Psoas muscle (tissue), 8 donors: ENCODE measurements at regions of chr4 and their contacts with region 1.

Region 1: GRCh38 chr4:76251441-76252270 is at the start of gene FAM47E:
- DNase-seq: peak; percentile 82 to 93
- ATAC-seq: peak; percentile 98 to 99 (median 98)
- H3K4me3 ChIP-seq: peak within 1 kb of the TSS; percentile 79
- H3K27ac ChIP-seq: peak within 1 kb of the TSS; percentile 78
- H3K4me1 ChIP-seq: peaks cover 10% of the 10 kb centered on the region
- H3K27me3 ChIP-seq: no peaks in the 10 kb centered on the region
- CTCF ChIP-seq: peak; percentile 49
- total RNA-seq, gene FAM47E: 1.7 to 4.6 (median 3.2) TPM

Region 2: DNA sequence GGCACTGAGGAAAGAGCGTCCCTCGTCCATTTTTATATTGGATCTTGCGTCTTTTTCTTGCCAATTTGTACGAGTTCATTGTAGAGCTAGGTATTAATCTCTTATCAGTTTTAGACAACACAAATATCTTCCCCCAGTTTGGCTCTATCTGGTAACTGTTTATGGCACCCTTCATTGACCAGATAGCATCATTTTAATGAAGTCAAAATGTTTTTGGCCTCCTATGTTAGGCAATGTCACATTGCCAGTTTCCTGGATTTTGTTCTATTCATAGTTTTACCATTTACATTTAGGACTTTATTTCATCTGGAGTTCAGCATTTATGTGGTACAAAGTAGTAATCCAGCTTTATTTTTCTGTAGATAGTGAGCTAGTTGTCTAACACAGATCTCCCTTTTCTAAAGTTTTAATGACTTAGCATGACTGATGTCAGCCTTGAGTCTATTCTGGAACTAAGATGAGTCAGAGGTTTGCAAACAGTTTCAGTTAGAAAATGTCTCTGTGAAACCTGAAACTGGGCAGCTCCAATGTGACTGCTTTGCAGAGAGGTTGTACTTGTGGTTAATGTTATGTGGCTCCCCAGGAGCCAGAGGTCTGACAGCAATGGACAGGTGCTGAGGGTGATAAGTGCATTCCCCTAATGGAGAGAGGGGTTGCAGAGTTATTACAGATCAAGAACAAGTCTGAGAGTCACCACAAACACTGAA is 49.6 kb after region 1 on chr4:
- intact Hi-C with region 1: loop called (anchors 5 kb)
- DNase-seq: peak; percentile 34 to 51
- ATAC-seq: peak; percentile 87 to 90 (median 88)
- H3K4me3 ChIP-seq: peak overlapping the region; percentile 10
- H3K27ac ChIP-seq: peak overlapping the region; percentile 87
- H3K4me1 ChIP-seq: peaks cover 54% of the 10 kb centered on the region
- H3K27me3 ChIP-seq: no peaks in the 10 kb centered on the region
- CTCF ChIP-seq: no peak

Region 3: DNA sequence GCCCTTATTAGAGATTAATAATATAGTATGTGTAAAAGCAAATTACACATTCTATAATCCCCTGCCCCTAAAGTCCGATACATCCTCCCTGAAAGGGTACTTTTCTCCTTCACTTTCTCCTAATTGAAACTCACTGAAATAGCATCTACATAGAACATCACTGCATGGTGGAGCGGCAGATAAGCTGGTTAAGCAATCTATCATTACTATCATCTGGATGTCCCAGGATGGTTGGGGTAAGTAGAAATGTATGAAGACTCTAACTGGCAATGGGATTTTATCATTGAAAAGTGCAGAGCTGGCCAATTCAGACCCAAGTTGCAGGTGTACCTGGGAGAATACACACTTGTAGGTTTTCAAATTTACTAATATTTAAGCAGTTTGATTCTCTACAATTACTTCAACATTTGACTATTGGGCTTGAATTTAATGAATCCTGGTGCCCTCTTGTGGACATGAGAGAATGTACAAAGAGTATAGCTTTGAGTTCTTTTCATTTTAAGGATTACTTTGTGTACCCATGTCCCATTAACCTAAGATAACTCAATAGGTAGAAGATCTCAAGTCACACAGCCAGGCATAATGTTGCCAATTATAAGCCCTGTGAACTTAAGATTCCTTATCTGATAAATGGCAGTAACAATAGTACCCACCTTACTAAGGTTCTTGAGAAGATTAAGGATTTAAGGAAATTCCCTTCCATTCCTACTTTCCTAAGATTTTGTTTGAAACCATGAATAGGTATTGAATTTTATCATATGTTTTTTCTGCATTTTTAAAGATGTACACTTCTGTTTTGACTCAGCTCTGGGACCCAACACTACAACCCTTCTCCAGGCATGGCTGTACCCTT is 253.2 kb after region 1 on chr4:
- intact Hi-C with region 1: loop called in 1 of 2 experiments (anchors 10 kb)
- DNase-seq: no peak
- ATAC-seq: peak; percentile 40 to 74 (median 54)
- H3K4me3 ChIP-seq: no peak overlapping the region
- H3K27ac ChIP-seq: no peak overlapping the region
- H3K4me1 ChIP-seq: no peaks in the 10 kb centered on the region
- H3K27me3 ChIP-seq: no peaks in the 10 kb centered on the region
- CTCF ChIP-seq: peak; percentile 75